ENCODE measurements at regions of chr9 and their contacts with region 1.

Region 1: DNA sequence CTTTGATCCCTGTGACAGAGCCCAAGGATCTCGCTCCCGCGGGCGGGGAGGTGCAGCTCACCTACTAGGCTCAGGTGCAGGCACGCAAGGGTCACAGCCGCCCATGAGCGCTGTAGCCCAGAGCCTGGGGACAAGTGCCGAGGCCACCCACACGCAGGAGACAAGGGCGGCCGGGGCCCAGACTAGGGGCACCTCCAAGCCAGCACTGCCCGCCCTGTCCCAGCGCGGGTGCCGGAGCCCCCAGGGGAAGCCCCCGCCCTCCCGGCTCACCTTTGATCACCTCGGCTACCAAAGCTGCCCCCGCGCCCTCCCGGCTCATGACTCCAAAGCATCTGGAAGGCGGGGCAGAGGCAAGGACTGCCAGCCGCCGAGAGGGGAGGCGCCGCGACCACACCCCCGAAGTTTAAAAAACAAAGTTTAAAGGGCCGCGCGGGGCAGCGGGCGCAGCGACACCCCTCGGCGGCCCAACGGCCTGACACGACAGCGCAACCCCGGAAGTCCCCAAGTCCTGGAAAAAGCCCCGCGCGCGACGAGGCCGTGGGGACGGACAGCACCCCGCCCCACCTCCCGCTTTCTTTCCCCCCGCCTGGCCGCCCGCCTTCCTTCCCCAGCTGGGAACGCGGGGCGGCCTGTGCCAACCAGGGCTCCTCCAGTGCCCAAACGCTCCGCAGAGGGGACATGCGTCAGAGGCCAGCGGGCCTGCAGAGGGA is 53.0 kb downstream of the CDC14B start:
- DNase-seq: peak; percentile 90 to 93
- ATAC-seq: peak; percentile 93
- H3K4me3 ChIP-seq: peak overlapping the region; percentile 90 to 92
- H3K27ac ChIP-seq: peak overlapping the region; percentile 84 to 93
- H3K4me1 ChIP-seq: peaks cover 0 to 3% of the 10 kb centered on the region in 2 donors
- H3K27me3 ChIP-seq: no peaks in the 10 kb centered on the region

Region 2: DNA sequence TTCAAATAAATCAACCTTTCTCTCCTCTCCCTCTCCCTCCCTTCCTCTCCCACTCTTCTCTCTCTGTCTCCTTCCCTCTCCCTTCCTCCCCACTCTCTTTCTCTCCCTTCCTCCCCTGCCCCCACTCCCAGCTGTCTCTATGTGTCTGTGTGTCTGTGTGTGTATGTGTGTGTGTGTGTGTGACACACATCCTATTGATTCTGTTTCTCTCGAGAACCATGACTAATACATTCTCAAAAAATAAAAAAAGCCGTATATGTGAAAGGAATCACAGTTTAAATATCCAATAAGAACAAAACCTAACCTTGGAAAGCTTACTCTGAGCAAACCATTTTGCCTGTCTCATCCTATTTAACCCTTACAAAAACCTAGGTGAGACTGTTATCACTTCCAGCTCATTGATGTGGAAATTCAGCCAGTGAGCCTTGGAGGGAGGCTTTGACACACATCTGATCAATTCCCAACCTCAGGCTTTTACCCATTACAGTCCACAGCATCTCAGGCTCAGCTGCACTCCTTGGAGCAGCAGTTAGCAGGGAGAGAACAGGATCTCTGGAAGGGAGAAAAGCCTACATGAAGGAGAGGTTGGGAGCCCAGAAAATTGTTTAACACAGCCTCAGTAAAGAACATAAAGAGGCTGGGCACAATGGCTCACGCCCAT is 273.0 kb before region 1 on chr9:
- intact Hi-C with region 1: no loop called
- DNase-seq: no peak
- ATAC-seq: no peak
- H3K4me3 ChIP-seq: no peak overlapping the region
- H3K27ac ChIP-seq: no peak overlapping the region
- H3K4me1 ChIP-seq: no peaks in the 10 kb centered on the region
- H3K27me3 ChIP-seq: no peaks in the 10 kb centered on the region

Region 3: GRCh38 chr9:96418074-96418809 is 148.4 kb before region 1 on chr9 and contains the start of gene ZNF367:
- intact Hi-C with region 1: loop called (anchors 5 kb)
- DNase-seq: peak; percentile 99
- ATAC-seq: peak; percentile 96
- H3K4me3 ChIP-seq: peak within 1 kb of the TSS; percentile 71 to 84
- H3K27ac ChIP-seq: peak within 1 kb of the TSS; percentile 68 to 98
- H3K4me1 ChIP-seq: peaks cover 0 to 3% of the 10 kb centered on the region in 2 donors
- H3K27me3 ChIP-seq: no peaks in the 10 kb centered on the region
- total RNA-seq, gene ZNF367: 1.3 to 1.8 TPM

Region 4: DNA sequence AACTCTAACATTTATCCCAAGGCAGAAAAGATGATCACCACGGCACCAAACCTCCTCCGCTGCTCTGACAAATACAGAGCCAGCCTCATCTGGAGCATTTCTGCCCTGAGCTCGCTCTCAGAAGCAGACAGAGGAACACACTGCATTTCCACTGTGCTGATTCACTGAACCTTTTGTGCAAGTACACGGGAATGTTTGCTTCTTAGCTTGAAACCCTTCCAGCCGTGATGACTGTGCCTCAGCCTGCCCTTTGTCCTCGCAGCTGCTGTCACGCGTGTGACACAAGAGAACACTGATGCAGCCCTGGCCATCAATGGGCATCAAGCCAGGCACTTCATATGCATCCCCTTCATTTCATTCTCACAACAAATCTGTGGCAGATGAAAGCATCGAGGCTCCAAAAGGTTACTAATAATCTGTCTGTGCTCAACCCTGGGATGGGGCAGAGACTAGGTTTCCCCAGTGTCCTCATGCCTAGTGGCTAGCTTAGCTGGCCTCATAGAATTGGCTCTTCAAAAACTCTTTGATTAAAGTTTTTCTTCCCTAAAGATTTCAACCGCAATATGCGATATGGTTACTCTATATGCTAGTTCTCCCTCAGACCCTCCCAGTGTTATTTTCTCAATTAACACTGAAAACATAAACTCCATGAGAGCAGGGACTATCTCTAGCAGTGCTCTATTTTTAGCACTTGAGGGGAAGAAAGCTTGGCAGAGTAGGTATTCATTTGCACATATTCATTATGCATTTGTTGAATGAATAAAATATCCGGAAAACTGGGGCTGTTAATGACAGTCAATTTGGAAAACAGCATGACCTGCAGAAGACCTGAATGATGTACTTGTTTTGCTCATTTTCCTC is 45.7 kb after region 1 on chr9:
- intact Hi-C with region 1: loop called (anchors 5 kb)
- DNase-seq: peak; percentile 58 to 78
- ATAC-seq: peak; percentile 83
- H3K4me3 ChIP-seq: no peak overlapping the region
- H3K27ac ChIP-seq: peak overlapping the region; percentile 14 to 87
- H3K4me1 ChIP-seq: peaks cover 0 to 1% of the 10 kb centered on the region in 2 donors
- H3K27me3 ChIP-seq: no peaks in the 10 kb centered on the region

Measured in aorta (tissue), 5 donors.